Left ventricle myocardium superior (tissue), 1 donor: ENCODE measurements at regions of chr3 and their contacts with region 1.

Region 1: GRCh38 chr3:145094355-145094941 is 1066.5 kb downstream of the PLOD2 start:
- DNase-seq: no peak
- ATAC-seq: no peak

Region 2: DNA sequence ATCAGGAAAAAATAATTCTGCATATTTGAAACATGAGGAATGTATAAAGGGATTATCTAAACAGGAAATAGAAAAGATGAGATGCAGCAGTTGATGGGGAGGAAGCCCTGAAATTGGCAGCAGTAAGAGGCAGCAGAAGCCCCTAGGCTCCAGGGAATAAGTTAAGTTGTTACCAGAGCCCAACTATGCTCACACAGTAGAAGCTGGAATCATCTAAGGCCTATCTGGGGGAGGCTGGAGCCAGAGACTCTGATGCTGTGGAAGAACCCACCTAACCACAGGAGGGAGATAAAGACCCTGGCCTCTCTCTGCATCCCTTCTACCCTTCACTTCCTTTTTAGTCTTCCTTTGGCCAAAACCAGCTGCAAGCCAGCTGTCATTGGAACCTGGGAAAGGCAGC is 603.1 kb before region 1 on chr3:
- intact Hi-C with region 1: no loop called
- DNase-seq: no peak
- ATAC-seq: no peak

Region 3: GRCh38 chr3:144915202-144915601 is 179.2 kb before region 1 on chr3:
- intact Hi-C with region 1: no loop called
- DNase-seq: no peak
- ATAC-seq: no peak

Region 4: GRCh38 chr3:145159640-145160039 is 65.2 kb after region 1 on chr3:
- intact Hi-C with region 1: no loop called
- DNase-seq: no peak
- ATAC-seq: no peak

Region 5: GRCh38 chr3:145395421-145395820 is 301.0 kb after region 1 on chr3:
- intact Hi-C with region 1: loop called (anchors 5 kb)
- DNase-seq: no peak
- ATAC-seq: no peak